Tibial artery (tissue), 4 donors: ENCODE measurements at regions of chr9 and their contacts with region 1.

Region 1: GRCh38 chr9:94882966-94883641 is 156.6 kb downstream of the AOPEP start:
- DNase-seq: no peak
- H3K4me3 ChIP-seq: no peak overlapping the region
- H3K27ac ChIP-seq: no peak overlapping the region
- H3K4me1 ChIP-seq: peaks cover 0 to 51% (median 16%) of the 10 kb centered on the region in 4 donors
- H3K27me3 ChIP-seq: no peaks in the 10 kb centered on the region
- CTCF ChIP-seq: no peak

Region 2: GRCh38 chr9:94656200-94656599 is 226.9 kb before region 1 on chr9:
- intact Hi-C with region 1: no loop called
- DNase-seq: no peak
- H3K4me3 ChIP-seq: peak overlapping the region; percentile 33 to 42
- H3K27ac ChIP-seq: peak overlapping the region in 1 of 2 donors; percentile 16
- H3K4me1 ChIP-seq: peaks cover 0 to 10% (median 4%) of the 10 kb centered on the region in 4 donors
- H3K27me3 ChIP-seq: no peaks in the 10 kb centered on the region
- CTCF ChIP-seq: no peak

Region 3: DNA sequence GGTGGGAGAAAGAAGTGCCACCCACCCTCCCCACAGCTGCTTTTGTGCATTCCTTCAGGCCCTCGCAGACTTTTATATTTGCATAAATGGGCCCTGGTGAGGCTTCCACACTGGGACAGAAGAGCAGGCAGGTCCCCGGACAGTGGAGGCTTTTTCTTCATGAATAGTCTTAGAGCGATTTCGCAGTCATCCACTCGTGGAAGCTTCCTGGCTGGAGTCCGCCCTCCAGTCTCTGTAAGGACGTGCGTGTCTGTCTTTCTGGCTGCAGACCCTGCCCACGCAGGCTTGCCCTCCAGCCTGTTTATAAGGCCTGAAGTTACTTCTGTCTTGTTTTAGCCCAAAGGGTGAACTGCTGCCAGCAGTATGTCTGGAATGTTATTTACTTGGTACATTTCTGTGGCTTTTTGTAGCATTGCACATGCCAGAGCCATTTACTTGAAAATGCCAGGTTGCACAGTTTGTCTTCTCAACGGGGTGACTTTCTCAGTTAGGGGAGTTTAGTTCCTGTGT is 39.0 kb after region 1 on chr9:
- intact Hi-C with region 1: no loop called
- DNase-seq: peak; percentile 69 to 89
- H3K4me3 ChIP-seq: peak overlapping the region; percentile 14 to 19
- H3K27ac ChIP-seq: peak overlapping the region; percentile 86 to 92
- H3K4me1 ChIP-seq: peaks cover 0 to 83% (median 49%) of the 10 kb centered on the region in 4 donors
- H3K27me3 ChIP-seq: no peaks in the 10 kb centered on the region
- CTCF ChIP-seq: no peak

Region 4: GRCh38 chr9:94945197-94946144 is 62.4 kb after region 1 on chr9:
- intact Hi-C with region 1: loop called (anchors 10 kb)
- DNase-seq: peak; percentile 67 to 78
- H3K4me3 ChIP-seq: no peak overlapping the region
- H3K27ac ChIP-seq: peak overlapping the region; percentile 65 to 67
- H3K4me1 ChIP-seq: peaks cover 0 to 63% (median 24%) of the 10 kb centered on the region in 4 donors
- H3K27me3 ChIP-seq: no peaks in the 10 kb centered on the region
- CTCF ChIP-seq: no peak